CD8-positive, alpha-beta T cell (primary cell): ENCODE measurements at regions of chr1 and their contacts with region 1.

Region 1: DNA sequence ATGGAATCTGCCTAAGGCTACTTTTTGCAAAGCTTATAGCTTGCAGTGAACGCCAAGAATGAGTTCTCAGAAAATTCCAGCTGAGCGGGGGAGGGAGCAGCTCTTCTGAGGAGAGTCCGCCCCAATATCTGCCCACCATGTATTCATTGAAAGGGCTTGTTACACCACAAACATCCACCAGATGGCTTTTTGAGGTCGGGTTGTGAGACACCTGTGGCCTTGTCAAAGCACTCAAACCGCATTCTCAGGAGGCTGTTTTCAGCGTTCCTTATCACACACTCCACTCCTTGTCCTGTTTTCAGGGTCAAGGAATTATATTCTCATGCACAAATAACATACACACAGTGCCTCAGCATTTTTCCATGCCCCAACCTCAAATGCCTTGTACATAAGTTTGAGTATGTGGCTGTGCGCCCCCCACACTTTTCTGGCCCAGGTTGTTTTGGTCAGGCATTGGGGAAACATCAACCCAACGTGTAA is 3.9 kb upstream of the C4BPB start:
- DNase-seq: peak in 8 of 9 experiments; percentile 29 to 82 (median 60)
- ATAC-seq: peak; percentile 79
- H3K4me3 ChIP-seq: no peak overlapping the region
- H3K4me3 Mint-ChIP-seq: no peak overlapping the region
- H3K27ac ChIP-seq: no peak overlapping the region
- H3K27ac Mint-ChIP-seq: no peak overlapping the region
- H3K4me1 ChIP-seq: peaks cover 21% of the 10 kb centered on the region
- H3K4me1 Mint-ChIP-seq: peaks cover 23% of the 10 kb centered on the region
- H3K27me3 ChIP-seq: no peaks in the 10 kb centered on the region
- H3K27me3 Mint-ChIP-seq: peaks cover 6% of the 10 kb centered on the region
- CTCF ChIP-seq: peak; percentile 67

Region 2: GRCh38 chr1:206846487-206846886 is 238.3 kb before region 1 on chr1:
- CTCF ChIA-PET with region 1: no interaction called
- POLR2A ChIA-PET with region 1: no interaction called
- intact Hi-C with region 1: no loop called
- DNase-seq: no peak
- ATAC-seq: no peak
- H3K4me3 ChIP-seq: no peak overlapping the region
- H3K4me3 Mint-ChIP-seq: no peak overlapping the region
- H3K27ac ChIP-seq: no peak overlapping the region
- H3K27ac Mint-ChIP-seq: no peak overlapping the region
- H3K4me1 ChIP-seq: no peaks in the 10 kb centered on the region
- H3K4me1 Mint-ChIP-seq: no peaks in the 10 kb centered on the region
- H3K27me3 ChIP-seq: no peaks in the 10 kb centered on the region
- H3K27me3 Mint-ChIP-seq: peaks cover 3% of the 10 kb centered on the region
- CTCF ChIP-seq: no peak

Region 3: GRCh38 chr1:207052911-207053769 is 31.6 kb before region 1 on chr1 and contains the start of gene PFKFB2:
- CTCF ChIA-PET with region 1: interaction called, 52 read pairs
- POLR2A ChIA-PET with region 1: no interaction called
- intact Hi-C with region 1: no loop called
- DNase-seq: peak; percentile 88 to 97 (median 95)
- ATAC-seq: peak; percentile 87
- H3K4me3 ChIP-seq: peak within 1 kb of the TSS; percentile 70 to 82
- H3K4me3 Mint-ChIP-seq: peak within 1 kb of the TSS; percentile 97
- H3K27ac ChIP-seq: peak within 1 kb of the TSS; percentile 70 to 83
- H3K27ac Mint-ChIP-seq: peak within 1 kb of the TSS; percentile 98
- H3K4me1 ChIP-seq: peaks cover 28% of the 10 kb centered on the region
- H3K4me1 Mint-ChIP-seq: peaks cover 44% of the 10 kb centered on the region
- H3K27me3 ChIP-seq: no peaks in the 10 kb centered on the region
- H3K27me3 Mint-ChIP-seq: no peaks in the 10 kb centered on the region
- CTCF ChIP-seq: peak; percentile 21
- total RNA-seq, gene PFKFB2: 8.1 to 8.5 TPM

Region 4: DNA sequence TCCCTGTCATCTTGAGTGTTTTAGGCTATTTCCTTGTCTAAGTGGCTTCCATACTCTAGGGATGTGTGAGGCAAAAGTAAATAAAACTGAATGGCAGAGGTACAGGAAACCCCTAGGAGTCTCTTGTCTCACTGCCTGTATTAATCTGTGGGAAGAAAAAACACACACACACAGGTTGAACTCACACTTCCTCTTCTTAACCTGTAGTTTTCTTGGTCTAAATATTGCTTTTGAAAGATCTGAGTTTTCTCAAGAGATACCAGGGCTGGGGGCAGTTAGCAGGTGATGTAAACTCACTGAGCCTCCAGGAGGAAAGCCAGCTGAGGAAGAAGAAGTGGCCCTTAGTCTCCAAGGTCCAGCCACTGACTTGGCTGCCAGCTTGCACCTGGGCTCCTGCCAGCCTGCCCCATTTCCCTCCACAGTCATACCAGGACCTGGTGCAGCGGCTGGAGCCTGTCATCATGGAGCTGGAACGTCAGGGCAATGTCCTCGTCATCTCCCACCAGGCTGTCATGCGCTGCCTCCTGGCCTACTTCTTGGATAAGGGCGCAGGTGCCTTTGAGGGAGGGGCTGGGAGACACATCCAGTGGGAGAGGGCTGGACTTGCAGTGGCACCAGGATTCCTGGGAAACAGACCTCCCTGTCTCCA is 14.8 kb before region 1 on chr1:
- CTCF ChIA-PET with region 1: interaction called, 16 read pairs
- POLR2A ChIA-PET with region 1: no interaction called
- intact Hi-C with region 1: no loop called
- DNase-seq: no peak
- ATAC-seq: no peak
- H3K4me3 ChIP-seq: no peak overlapping the region
- H3K4me3 Mint-ChIP-seq: no peak overlapping the region
- H3K27ac ChIP-seq: peak overlapping the region in 1 of 2 experiments; percentile 12
- H3K27ac Mint-ChIP-seq: peak overlapping the region; percentile 87
- H3K4me1 ChIP-seq: peaks cover 36% of the 10 kb centered on the region
- H3K4me1 Mint-ChIP-seq: peaks cover 40% of the 10 kb centered on the region
- H3K27me3 ChIP-seq: no peaks in the 10 kb centered on the region
- H3K27me3 Mint-ChIP-seq: no peaks in the 10 kb centered on the region
- CTCF ChIP-seq: no peak

Region 5: GRCh38 chr1:207172321-207172720 is 87.6 kb after region 1 on chr1:
- CTCF ChIA-PET with region 1: no interaction called
- POLR2A ChIA-PET with region 1: no interaction called
- intact Hi-C with region 1: no loop called
- DNase-seq: no peak
- ATAC-seq: no peak
- H3K4me3 ChIP-seq: no peak overlapping the region
- H3K4me3 Mint-ChIP-seq: no peak overlapping the region
- H3K27ac ChIP-seq: no peak overlapping the region
- H3K27ac Mint-ChIP-seq: no peak overlapping the region
- H3K4me1 ChIP-seq: no peaks in the 10 kb centered on the region
- H3K4me1 Mint-ChIP-seq: peaks cover 2% of the 10 kb centered on the region
- H3K27me3 ChIP-seq: no peaks in the 10 kb centered on the region
- H3K27me3 Mint-ChIP-seq: no peaks in the 10 kb centered on the region
- CTCF ChIP-seq: no peak

Region 6: GRCh38 chr1:207309775-207310273 is 225.1 kb after region 1 on chr1:
- CTCF ChIA-PET with region 1: interaction called, 3 read pairs
- POLR2A ChIA-PET with region 1: no interaction called
- intact Hi-C with region 1: loop called in 1 of 2 experiments (anchors 10 kb)
- DNase-seq: no peak
- ATAC-seq: no peak
- H3K4me3 ChIP-seq: peak overlapping the region in 1 of 2 experiments; percentile 4
- H3K4me3 Mint-ChIP-seq: peak overlapping the region; percentile 61
- H3K27ac ChIP-seq: no peak overlapping the region
- H3K27ac Mint-ChIP-seq: peak overlapping the region; percentile 58
- H3K4me1 ChIP-seq: peaks cover 20% of the 10 kb centered on the region
- H3K4me1 Mint-ChIP-seq: peaks cover 22% of the 10 kb centered on the region
- H3K27me3 ChIP-seq: no peaks in the 10 kb centered on the region
- H3K27me3 Mint-ChIP-seq: no peaks in the 10 kb centered on the region
- CTCF ChIP-seq: no peak

Region 7: GRCh38 chr1:207404849-207405525 is 320.2 kb after region 1 on chr1:
- CTCF ChIA-PET with region 1: interaction called, 115 read pairs
- POLR2A ChIA-PET with region 1: no interaction called
- intact Hi-C with region 1: loop called (anchors 1 kb)
- DNase-seq: peak in 2 of 9 experiments; percentile 68 to 79
- ATAC-seq: peak; percentile 71
- H3K4me3 ChIP-seq: no peak overlapping the region
- H3K4me3 Mint-ChIP-seq: no peak overlapping the region
- H3K27ac ChIP-seq: no peak overlapping the region
- H3K27ac Mint-ChIP-seq: no peak overlapping the region
- H3K4me1 ChIP-seq: no peaks in the 10 kb centered on the region
- H3K4me1 Mint-ChIP-seq: peaks cover 3% of the 10 kb centered on the region
- H3K27me3 ChIP-seq: no peaks in the 10 kb centered on the region
- H3K27me3 Mint-ChIP-seq: peaks cover 5% of the 10 kb centered on the region
- CTCF ChIP-seq: peak; percentile 91